MCF 10A (cell line): ENCODE measurements at regions of chr17 and their contacts with region 1.

Region 1: GRCh38 chr17:55527540-55528118 is 16.4 kb upstream of the SMIM36 start:
- DNase-seq: peak; percentile 55
- H3K4me3 Mint-ChIP-seq: no peak overlapping the region
- H3K27ac Mint-ChIP-seq: no peak overlapping the region
- H3K4me1 Mint-ChIP-seq: no peaks in the 10 kb centered on the region
- H3K27me3 Mint-ChIP-seq: no peaks in the 10 kb centered on the region
- CTCF ChIP-seq: peak; percentile 78

Region 2: GRCh38 chr17:55576996-55577586 is 49.5 kb after region 1 on chr17:
- CTCF ChIA-PET with region 1: interaction called, 12 read pairs
- POLR2A ChIA-PET with region 1: no interaction called
- intact Hi-C with region 1: no loop called
- DNase-seq: no peak
- H3K4me3 Mint-ChIP-seq: no peak overlapping the region
- H3K27ac Mint-ChIP-seq: no peak overlapping the region
- H3K4me1 Mint-ChIP-seq: no peaks in the 10 kb centered on the region
- H3K27me3 Mint-ChIP-seq: no peaks in the 10 kb centered on the region
- CTCF ChIP-seq: no peak

Region 3: GRCh38 chr17:55607731-55608341 is 80.2 kb after region 1 on chr17:
- CTCF ChIA-PET with region 1: interaction called, 231 read pairs
- POLR2A ChIA-PET with region 1: interaction called, 27 read pairs
- intact Hi-C with region 1: no loop called
- DNase-seq: peak; percentile 4
- H3K4me3 Mint-ChIP-seq: no peak overlapping the region
- H3K27ac Mint-ChIP-seq: no peak overlapping the region
- H3K4me1 Mint-ChIP-seq: no peaks in the 10 kb centered on the region
- H3K27me3 Mint-ChIP-seq: no peaks in the 10 kb centered on the region
- CTCF ChIP-seq: no peak

Region 4: DNA sequence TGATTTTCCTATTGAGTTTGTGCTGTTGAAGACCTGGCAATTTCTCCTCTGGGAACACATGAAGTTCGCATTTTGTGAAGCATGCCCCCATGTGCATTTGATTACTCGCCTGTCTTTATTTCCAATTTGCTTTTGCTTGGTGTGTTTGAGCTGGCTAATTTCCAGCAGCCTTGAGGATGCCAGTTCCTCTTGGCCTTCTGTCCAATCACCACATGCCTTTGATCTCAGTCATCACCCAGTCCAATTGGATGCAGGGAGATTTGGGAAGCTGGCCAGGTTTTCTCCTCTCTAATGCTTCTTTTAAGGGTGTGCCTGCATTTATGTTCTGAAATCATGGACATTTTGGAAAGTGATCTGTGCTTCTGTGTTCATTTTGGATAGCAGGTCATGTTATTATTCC is 198.8 kb after region 1 on chr17:
- CTCF ChIA-PET with region 1: interaction called, 112 read pairs
- POLR2A ChIA-PET with region 1: no interaction called
- intact Hi-C with region 1: no loop called
- DNase-seq: peak; percentile 94
- H3K4me3 Mint-ChIP-seq: peak overlapping the region; percentile 63
- H3K27ac Mint-ChIP-seq: peak overlapping the region; percentile 93
- H3K4me1 Mint-ChIP-seq: peaks cover 68% of the 10 kb centered on the region
- H3K27me3 Mint-ChIP-seq: no peaks in the 10 kb centered on the region
- CTCF ChIP-seq: no peak

Region 5: GRCh38 chr17:55770148-55770870 is 242.7 kb after region 1 on chr17:
- CTCF ChIA-PET with region 1: interaction called, 153 read pairs
- POLR2A ChIA-PET with region 1: interaction called, 6 read pairs
- intact Hi-C with region 1: loop called (anchors 1 kb)
- DNase-seq: peak; percentile 74
- H3K4me3 Mint-ChIP-seq: no peak overlapping the region
- H3K27ac Mint-ChIP-seq: no peak overlapping the region
- H3K4me1 Mint-ChIP-seq: peaks cover 27% of the 10 kb centered on the region
- H3K27me3 Mint-ChIP-seq: no peaks in the 10 kb centered on the region
- CTCF ChIP-seq: peak; percentile 62

Region 6: GRCh38 chr17:55825213-55825612 is 297.6 kb after region 1 on chr17:
- CTCF ChIA-PET with region 1: interaction called, 26 read pairs
- POLR2A ChIA-PET with region 1: no interaction called
- intact Hi-C with region 1: loop called (anchors 1 kb)
- DNase-seq: peak; percentile 41
- H3K4me3 Mint-ChIP-seq: no peak overlapping the region
- H3K27ac Mint-ChIP-seq: no peak overlapping the region
- H3K4me1 Mint-ChIP-seq: no peaks in the 10 kb centered on the region
- H3K27me3 Mint-ChIP-seq: no peaks in the 10 kb centered on the region
- CTCF ChIP-seq: peak; percentile 16

Region 7: GRCh38 chr17:56478836-56479447 is 951.3 kb after region 1 on chr17:
- CTCF ChIA-PET with region 1: interaction called, 3 read pairs
- POLR2A ChIA-PET with region 1: no interaction called
- intact Hi-C with region 1: loop called (anchors 2 kb)
- DNase-seq: peak; percentile 59
- H3K4me3 Mint-ChIP-seq: no peak overlapping the region
- H3K27ac Mint-ChIP-seq: no peak overlapping the region
- H3K4me1 Mint-ChIP-seq: no peaks in the 10 kb centered on the region
- H3K27me3 Mint-ChIP-seq: no peaks in the 10 kb centered on the region
- CTCF ChIP-seq: peak; percentile 43